PC-3 (cell line): ENCODE measurements at regions of chr3 and their contacts with region 1.

Region 1: GRCh38 chr3:194682694-194683310 is 2.9 kb upstream of the FAM43A start:
- DNase-seq: peak; percentile 97
- ATAC-seq: peak; percentile 54
- H3K4me3 ChIP-seq: no peak overlapping the region; the same call in 1 of the 2 replicates
- H3K27ac ChIP-seq: peak overlapping the region; percentile 60
- H3K4me1 ChIP-seq: peaks cover 20% of the 10 kb centered on the region
- H3K27me3 ChIP-seq: no peaks in the 10 kb centered on the region
- CTCF ChIP-seq: peak; percentile 98

Region 2: DNA sequence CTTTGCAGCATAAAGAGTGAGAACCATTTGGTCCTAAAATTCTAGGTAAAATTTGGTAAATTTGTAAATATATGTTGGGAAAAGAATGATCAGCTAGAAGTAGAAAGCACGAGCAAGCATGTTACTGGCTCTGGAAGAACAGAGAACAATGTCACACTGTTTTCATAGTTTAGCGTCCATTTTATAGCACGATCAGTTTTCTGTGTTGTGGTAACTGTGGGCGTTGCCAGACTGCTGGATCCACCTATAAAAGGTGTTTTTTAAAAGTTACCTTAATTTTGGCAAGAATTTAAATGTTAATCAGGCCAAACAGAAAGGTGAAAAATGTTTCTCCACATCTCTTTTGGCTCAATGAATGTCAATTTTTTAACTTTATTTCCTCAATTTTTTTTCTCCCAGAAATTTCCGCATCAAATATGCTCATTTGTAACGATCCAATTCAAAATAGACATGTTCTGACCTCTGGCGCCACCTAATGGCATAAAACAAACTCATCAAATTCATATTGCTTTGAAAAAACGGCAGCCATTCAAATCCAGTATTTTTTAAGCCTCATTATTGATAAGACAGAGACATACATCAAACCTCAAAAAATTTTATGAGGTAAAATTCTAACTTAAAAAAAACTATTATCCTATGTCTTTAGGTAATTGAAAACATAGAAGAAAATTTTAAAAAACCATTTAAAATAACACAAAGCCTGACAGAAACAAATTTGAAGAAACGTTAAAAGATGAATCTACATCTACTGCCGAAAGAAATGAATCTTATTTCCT is 278.2 kb before region 1 on chr3:
- CTCF ChIA-PET with region 1: no interaction called
- POLR2A ChIA-PET with region 1: no interaction called
- intact Hi-C with region 1: no loop called
- DNase-seq: peak; percentile 75
- ATAC-seq: no peak
- H3K4me3 ChIP-seq: no peak overlapping the region
- H3K27ac ChIP-seq: no peak overlapping the region
- H3K4me1 ChIP-seq: peaks cover 8% of the 10 kb centered on the region; the same call in 1 of the 2 replicates
- H3K27me3 ChIP-seq: no peaks in the 10 kb centered on the region
- CTCF ChIP-seq: peak; percentile 86

Region 3: DNA sequence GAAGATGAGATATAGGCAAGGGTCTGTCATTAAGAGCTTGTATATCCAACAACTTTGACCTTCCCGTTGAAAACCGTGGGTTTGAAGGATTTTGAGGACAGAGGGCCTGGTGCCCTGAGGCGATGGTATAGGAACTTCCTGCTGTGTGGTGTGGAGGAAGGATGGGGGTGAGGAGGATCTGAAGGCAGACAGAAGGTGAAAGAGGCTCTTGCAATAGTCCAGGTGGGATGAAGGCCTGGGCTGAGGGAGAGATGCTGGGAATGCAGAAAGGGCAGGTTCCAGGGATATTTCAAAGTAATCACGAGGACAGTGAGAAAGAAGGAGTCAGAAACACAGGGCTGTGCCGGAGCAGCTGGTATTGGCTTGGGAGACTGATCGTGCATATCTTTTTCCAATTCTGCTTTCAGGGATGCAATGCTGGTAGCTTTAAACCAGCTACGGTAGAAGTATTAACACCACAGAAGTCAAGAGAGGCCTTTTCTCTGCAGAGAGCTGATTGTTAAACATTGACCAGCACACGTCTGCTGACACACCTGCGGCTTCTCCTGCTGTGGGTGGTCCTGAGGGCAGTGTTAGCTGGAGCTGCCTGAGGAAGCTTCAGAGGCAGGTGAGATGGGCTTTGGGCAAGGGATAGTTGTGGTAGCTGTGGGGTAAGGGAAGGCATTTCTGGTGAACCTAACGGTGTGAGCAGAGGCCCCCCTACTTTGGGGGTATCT is 23.8 kb after region 1 on chr3:
- CTCF ChIA-PET with region 1: no interaction called
- POLR2A ChIA-PET with region 1: no interaction called
- intact Hi-C with region 1: no loop called
- DNase-seq: no peak
- ATAC-seq: no peak
- H3K4me3 ChIP-seq: no peak overlapping the region
- H3K27ac ChIP-seq: no peak overlapping the region
- H3K4me1 ChIP-seq: peaks cover 7% of the 10 kb centered on the region
- H3K27me3 ChIP-seq: no peaks in the 10 kb centered on the region
- CTCF ChIP-seq: no peak

Region 4: GRCh38 chr3:194727435-194728128 is 44.8 kb after region 1 on chr3:
- CTCF ChIA-PET with region 1: interaction called, 3 read pairs
- POLR2A ChIA-PET with region 1: interaction called, 3 read pairs
- intact Hi-C with region 1: loop called (anchors 2 kb)
- DNase-seq: peak; percentile 69
- ATAC-seq: no peak
- H3K4me3 ChIP-seq: no peak overlapping the region
- H3K27ac ChIP-seq: peak overlapping the region; percentile 41
- H3K4me1 ChIP-seq: peaks cover 38% of the 10 kb centered on the region
- H3K27me3 ChIP-seq: no peaks in the 10 kb centered on the region
- CTCF ChIP-seq: no peak

Region 5: GRCh38 chr3:194814878-194815357 is 132.1 kb after region 1 on chr3:
- CTCF ChIA-PET with region 1: interaction called, 3 read pairs
- POLR2A ChIA-PET with region 1: no interaction called
- intact Hi-C with region 1: loop called (anchors 5 kb)
- DNase-seq: peak; percentile 41
- ATAC-seq: peak; percentile 67
- H3K4me3 ChIP-seq: no peak overlapping the region
- H3K27ac ChIP-seq: no peak overlapping the region
- H3K4me1 ChIP-seq: no peaks in the 10 kb centered on the region
- H3K27me3 ChIP-seq: no peaks in the 10 kb centered on the region
- CTCF ChIP-seq: no peak

Region 6: GRCh38 chr3:194952841-194953241 is 270.0 kb after region 1 on chr3:
- CTCF ChIA-PET with region 1: interaction called, 6 read pairs
- POLR2A ChIA-PET with region 1: no interaction called
- intact Hi-C with region 1: loop called (anchors 1 kb)
- DNase-seq: no peak
- ATAC-seq: no peak
- H3K4me3 ChIP-seq: no peak overlapping the region
- H3K27ac ChIP-seq: no peak overlapping the region
- H3K4me1 ChIP-seq: no peaks in the 10 kb centered on the region
- H3K27me3 ChIP-seq: no peaks in the 10 kb centered on the region
- CTCF ChIP-seq: no peak

Region 7: GRCh38 chr3:195106418-195106906 is 423.7 kb after region 1 on chr3:
- CTCF ChIA-PET with region 1: interaction called, 9 read pairs
- POLR2A ChIA-PET with region 1: no interaction called
- intact Hi-C with region 1: loop called (anchors 1 kb)
- DNase-seq: peak; percentile 69
- ATAC-seq: peak; percentile 49
- H3K4me3 ChIP-seq: peak overlapping the region; percentile 34; the same call in 1 of the 2 replicates
- H3K27ac ChIP-seq: peak overlapping the region; percentile 88
- H3K4me1 ChIP-seq: peaks cover 50% of the 10 kb centered on the region
- H3K27me3 ChIP-seq: no peaks in the 10 kb centered on the region
- CTCF ChIP-seq: peak; percentile 98

Region 8: GRCh38 chr3:195583831-195584542 is 901.2 kb after region 1 on chr3 and contains the start of gene APOD:
- CTCF ChIA-PET with region 1: no interaction called
- POLR2A ChIA-PET with region 1: interaction called, 13 read pairs
- intact Hi-C with region 1: no loop called
- DNase-seq: peak; percentile 50
- ATAC-seq: peak; percentile 95
- H3K4me3 ChIP-seq: no peak within 1 kb of the TSS
- H3K27ac ChIP-seq: no peak within 1 kb of the TSS
- H3K4me1 ChIP-seq: peaks cover 11% of the 10 kb centered on the region; the same call in 1 of the 2 replicates
- H3K27me3 ChIP-seq: no peaks in the 10 kb centered on the region; the same call in 1 of the 2 replicates
- CTCF ChIP-seq: no peak
- total RNA-seq, gene APOD: 0.29 TPM in 1 of 2 replicates, not detected in the other